Activated CD4-positive, alpha-beta memory T cell treated with anti-CD3 and anti-CD28 coated beads, Interleukin-2, amount 10 ng/mL, durations not matched to agents 7 days and 5 days (primary cell): ENCODE measurements at regions of chr1 and their contacts with region 1.

Region 1: DNA sequence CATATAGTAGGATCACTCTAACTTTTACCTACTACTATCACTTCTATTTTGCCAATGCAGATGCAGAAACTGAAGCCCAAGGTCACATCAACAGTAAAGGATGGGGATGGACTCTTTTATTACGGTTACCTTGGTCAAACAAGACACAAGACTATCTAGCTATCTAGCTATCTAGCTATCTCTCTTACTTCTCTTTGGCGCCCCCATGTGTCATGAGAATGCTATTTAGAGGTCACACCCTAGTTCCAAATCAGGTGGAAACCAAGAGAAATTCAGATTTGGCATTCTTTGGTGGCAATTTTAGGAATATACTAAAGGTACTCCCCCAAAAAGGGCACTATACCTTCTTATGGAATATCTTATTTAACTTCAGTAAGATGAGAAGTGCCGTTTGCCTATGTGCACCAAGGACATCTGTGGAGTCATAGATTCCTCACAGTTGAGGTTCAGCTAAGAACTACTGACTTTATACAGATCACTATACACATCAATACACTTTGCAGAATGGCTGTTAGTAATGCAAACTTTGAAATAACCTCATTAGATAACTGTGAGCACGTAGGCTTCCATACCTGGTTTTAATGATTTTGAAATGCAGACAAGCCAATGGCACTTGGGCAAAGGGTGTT is 6.7 kb downstream of the ZNF648 start:
- DNase-seq: peak; percentile 64
- H3K4me3 Mint-ChIP-seq: no peak overlapping the region
- H3K27ac Mint-ChIP-seq: no peak overlapping the region
- H3K4me1 Mint-ChIP-seq: peaks cover 6% of the 10 kb centered on the region
- H3K27me3 Mint-ChIP-seq: peaks cover 33% of the 10 kb centered on the region

Region 2: GRCh38 chr1:181479137-181479745 is 575.6 kb before region 1 on chr1:
- CTCF ChIA-PET with region 1: interaction called, 19 read pairs
- POLR2A ChIA-PET with region 1: no interaction called
- DNase-seq: peak; percentile 29
- H3K4me3 Mint-ChIP-seq: no peak overlapping the region
- H3K27ac Mint-ChIP-seq: no peak overlapping the region
- H3K4me1 Mint-ChIP-seq: peaks cover 7% of the 10 kb centered on the region
- H3K27me3 Mint-ChIP-seq: peaks cover 42% of the 10 kb centered on the region

Region 3: GRCh38 chr1:181893937-181894336 is 160.9 kb before region 1 on chr1:
- CTCF ChIA-PET with region 1: no interaction called
- POLR2A ChIA-PET with region 1: no interaction called
- DNase-seq: no peak
- H3K4me3 Mint-ChIP-seq: no peak overlapping the region
- H3K27ac Mint-ChIP-seq: no peak overlapping the region
- H3K4me1 Mint-ChIP-seq: no peaks in the 10 kb centered on the region
- H3K27me3 Mint-ChIP-seq: no peaks in the 10 kb centered on the region

Region 4: DNA sequence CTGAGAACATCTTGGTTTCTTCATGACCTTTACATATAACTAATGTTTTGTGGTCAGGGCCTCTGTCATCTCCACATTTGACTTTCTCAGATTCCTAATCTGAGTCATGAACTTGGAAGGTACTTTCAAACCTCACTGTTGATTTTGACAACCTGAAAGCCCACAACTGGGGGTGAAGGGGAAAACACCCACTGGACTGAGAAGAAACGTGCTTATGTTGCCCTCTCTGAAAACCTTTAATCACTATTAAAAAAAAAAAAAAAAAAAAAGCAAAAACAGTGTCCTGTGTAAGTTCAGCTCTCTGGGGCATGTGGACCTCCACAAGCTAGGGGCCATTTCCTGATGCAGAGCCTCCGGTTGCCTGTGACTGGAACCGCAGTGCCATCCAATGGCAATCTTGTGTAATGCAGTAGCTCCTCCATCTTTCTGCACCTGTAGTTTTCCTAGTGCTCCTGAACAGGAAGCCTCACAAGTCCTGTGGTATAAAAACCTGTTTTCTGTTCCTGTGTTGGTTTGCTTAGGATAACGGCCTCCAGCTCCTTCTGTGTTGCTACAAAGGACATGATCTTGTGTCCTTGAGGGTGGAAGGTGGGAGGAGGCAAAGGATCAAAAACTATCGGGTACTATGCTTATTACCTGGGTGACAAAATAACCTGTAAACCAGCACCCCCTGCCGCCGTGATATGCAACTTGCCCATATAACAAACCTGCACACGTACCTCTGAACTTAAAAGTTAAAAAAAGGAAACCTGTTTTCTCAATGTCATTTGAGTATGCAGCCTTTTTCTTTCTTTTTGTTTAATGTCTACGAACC is 117.8 kb before region 1 on chr1:
- CTCF ChIA-PET with region 1: interaction called, 14 read pairs
- POLR2A ChIA-PET with region 1: no interaction called
- DNase-seq: peak; percentile 44
- H3K4me3 Mint-ChIP-seq: no peak overlapping the region
- H3K27ac Mint-ChIP-seq: no peak overlapping the region
- H3K4me1 Mint-ChIP-seq: peaks cover 1% of the 10 kb centered on the region
- H3K27me3 Mint-ChIP-seq: no peaks in the 10 kb centered on the region

Region 5: GRCh38 chr1:182029379-182030331 is 25.2 kb before region 1 on chr1:
- CTCF ChIA-PET with region 1: interaction called, 16 read pairs
- POLR2A ChIA-PET with region 1: interaction called, 4 read pairs
- DNase-seq: peak; percentile 99
- H3K4me3 Mint-ChIP-seq: peak overlapping the region; percentile 97
- H3K27ac Mint-ChIP-seq: peak overlapping the region; percentile 97
- H3K4me1 Mint-ChIP-seq: peaks cover 17% of the 10 kb centered on the region
- H3K27me3 Mint-ChIP-seq: peaks cover 5% of the 10 kb centered on the region

Region 6: DNA sequence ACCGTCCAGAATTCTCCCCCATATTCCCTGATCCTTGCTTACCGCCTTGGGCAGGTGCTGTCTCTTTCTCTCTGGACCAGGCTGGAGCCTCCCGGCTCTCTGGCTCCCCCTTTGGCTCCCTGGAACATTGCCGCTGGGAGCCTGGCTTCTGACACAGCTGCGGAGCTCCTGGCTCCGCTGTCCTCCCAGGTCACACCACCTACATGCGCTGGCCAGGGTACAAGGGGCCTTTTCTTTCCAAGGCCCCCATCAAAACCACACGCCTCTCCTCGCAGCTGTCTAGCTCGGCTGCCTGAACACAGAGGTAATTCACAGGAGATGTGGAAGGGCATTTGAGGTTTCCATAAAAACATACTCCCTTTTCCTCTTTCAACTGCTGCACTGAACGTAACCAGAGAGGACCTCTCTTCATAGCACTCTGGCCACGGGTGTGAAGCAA is 14.2 kb after region 1 on chr1:
- CTCF ChIA-PET with region 1: interaction called, 23 read pairs
- POLR2A ChIA-PET with region 1: no interaction called
- DNase-seq: peak; percentile 41
- H3K4me3 Mint-ChIP-seq: no peak overlapping the region
- H3K27ac Mint-ChIP-seq: no peak overlapping the region
- H3K4me1 Mint-ChIP-seq: no peaks in the 10 kb centered on the region
- H3K27me3 Mint-ChIP-seq: peaks cover 25% of the 10 kb centered on the region